Mucosa of descending colon (tissue), 3 donors: ENCODE measurements at regions of chr15 and their contacts with region 1.

Region 1: GRCh38 chr15:45166834-45167630 is 20.7 kb downstream of the SHF start:
- DNase-seq: peak; percentile 88 to 93 (median 92)
- ATAC-seq: peak; percentile 90
- H3K4me3 ChIP-seq: peak overlapping the region; percentile 59
- H3K4me1 ChIP-seq: peaks cover 6% of the 10 kb centered on the region
- CTCF ChIP-seq: peak; percentile 61

Region 2: GRCh38 chr15:44836094-44836493 is 330.9 kb before region 1 on chr15:
- intact Hi-C with region 1: no loop called
- DNase-seq: no peak
- ATAC-seq: no peak
- H3K4me3 ChIP-seq: no peak overlapping the region
- H3K4me1 ChIP-seq: no peaks in the 10 kb centered on the region
- CTCF ChIP-seq: no peak

Region 3: DNA sequence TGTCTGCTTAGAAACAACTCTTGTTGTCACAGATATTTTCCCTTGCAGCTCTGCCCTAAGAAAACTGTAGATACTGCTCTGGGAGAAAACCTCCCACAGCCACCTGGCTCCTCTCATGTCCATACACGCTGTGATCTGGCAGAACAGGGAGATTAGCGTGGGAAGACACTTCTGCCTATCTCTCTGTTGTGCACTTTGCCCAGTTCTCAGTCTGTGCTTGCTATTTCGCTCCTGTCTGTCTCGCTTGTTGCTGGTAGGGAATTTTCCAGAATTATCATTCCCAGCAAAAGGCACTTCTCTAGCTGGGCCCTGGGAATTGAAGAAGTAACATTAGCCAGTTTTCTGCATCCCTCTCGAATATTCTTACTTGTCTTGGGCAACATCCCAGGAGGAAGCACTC is 219.4 kb after region 1 on chr15:
- intact Hi-C with region 1: loop called in 1 of 2 experiments (anchors 10 kb)
- DNase-seq: no peak
- ATAC-seq: no peak
- H3K4me3 ChIP-seq: no peak overlapping the region
- H3K4me1 ChIP-seq: no peaks in the 10 kb centered on the region
- CTCF ChIP-seq: no peak